ENCODE measurements at regions of chr4 and their contacts with region 1.

Region 1: GRCh38 chr4:47816748-47817147 is 21.1 kb downstream of the CORIN start:
- DNase-seq: no peak

Region 2: DNA sequence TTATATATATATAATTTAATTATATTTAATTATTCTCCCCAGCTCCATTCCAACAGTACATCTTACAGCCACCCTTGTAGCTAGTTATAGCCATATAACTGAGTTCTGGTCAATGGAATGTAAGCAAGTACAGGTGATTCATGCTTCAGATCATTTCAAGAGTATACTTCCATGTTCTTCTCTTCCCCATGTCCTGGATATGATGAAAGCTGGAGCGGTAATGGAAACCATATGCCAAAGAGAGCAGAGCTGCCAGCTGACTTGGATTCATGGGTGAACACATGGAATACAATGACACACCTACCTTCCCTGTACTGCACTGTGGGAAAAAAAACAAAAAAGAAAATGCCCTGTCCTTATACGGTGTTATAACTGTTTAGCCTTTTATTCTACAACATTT is 38.6 kb after region 1 on chr4:
- intact Hi-C with region 1: loop called in 1 of 2 experiments (anchors 2 kb)
- DNase-seq: no peak